Esophagus squamous epithelium (tissue), 5 donors: ENCODE measurements at regions of chr9 and their contacts with region 1.

Region 1: DNA sequence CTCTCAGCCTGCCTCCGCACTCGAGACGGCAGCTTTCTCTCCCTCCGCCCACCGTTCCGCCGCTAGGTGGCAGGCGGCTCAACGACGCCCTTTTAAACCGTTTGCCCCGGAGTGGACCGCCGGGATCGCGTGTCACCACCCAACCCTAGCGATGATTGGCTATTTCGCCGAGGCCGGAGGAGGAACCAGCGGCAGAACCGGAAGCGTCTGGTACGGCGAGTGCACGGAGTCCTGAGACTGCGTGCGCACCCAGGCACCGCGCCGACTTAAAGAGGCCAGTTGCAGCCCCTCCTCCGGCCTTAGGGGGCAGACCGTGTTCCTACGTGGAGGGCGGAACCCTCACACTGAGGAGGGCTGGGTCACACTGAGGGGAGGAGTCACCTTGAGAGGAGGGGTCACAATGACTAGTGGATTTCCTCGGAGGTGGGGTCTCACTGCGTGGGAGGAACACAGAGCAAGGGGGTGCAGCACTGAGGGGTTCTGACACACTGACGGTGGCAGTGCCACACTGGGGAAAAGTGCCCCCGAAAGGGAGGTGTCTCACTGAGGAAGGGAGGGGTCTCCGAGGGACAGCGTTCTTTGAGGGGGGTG is 980 bp upstream of the TESK1 start:
- DNase-seq: peak; percentile 98
- H3K4me3 ChIP-seq: peak overlapping the region; percentile 63 to 96 (median 84)
- H3K27ac ChIP-seq: peak overlapping the region; percentile 89 to 98 (median 96)
- H3K4me1 ChIP-seq: peaks cover 15 to 46% (median 16%) of the 10 kb centered on the region in 3 donors
- H3K27me3 ChIP-seq: no peaks in the 10 kb centered on the region
- CTCF ChIP-seq: peak; percentile 83 to 99 (median 98)
- POLR2A ChIP-seq: peak in 3 of 4 donors; percentile 37 to 72 (median 59)

Region 2: DNA sequence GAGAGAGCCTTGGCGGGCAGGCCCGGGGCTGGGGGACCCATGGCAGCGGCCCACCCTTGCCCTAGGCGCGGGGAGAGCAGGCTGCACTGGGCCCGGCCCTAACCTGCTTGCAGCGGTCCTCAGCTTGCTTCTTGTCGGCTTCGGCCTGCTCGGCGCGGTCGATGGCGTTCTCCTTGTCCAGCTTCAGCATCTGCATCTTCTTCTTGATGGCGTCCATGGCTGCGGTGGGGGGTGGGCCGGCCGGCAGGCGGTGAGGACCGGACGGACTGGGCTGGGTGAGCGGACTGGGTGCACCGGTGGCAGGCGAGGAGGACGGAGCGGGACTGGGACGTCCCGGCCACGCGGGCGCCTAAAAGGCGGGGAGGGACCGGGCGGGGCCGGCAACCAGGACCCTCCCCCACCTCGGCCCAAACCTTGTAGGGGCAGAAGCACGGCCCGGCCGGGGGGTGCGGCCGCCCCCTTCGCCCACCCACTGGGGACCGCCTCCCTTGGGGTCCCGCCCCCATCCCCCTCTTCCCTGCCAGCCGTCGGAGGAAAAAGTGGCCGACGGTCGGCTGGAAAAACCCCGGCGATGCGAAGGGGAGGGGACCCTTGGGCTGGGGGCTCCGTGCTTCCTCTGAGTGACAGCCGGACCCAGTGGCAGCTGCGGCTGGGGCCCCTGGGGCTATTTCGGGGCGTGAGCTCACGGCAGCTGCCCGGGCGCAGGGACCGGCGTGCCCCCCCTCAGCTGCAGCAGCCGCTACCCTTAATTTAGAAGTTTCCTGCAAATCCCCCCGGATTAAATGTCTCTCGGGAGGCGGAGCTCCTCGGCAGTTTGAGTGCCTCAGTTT is 85.7 kb after region 1 on chr9 and contains the start of gene TPM2:
- intact Hi-C with region 1: loop called (anchors 10 kb)
- DNase-seq: no peak
- H3K4me3 ChIP-seq: peak within 1 kb of the TSS; percentile 49 to 76 (median 65)
- H3K27ac ChIP-seq: peak within 1 kb of the TSS; percentile 74 to 92 (median 88)
- H3K4me1 ChIP-seq: peaks cover 0 to 41% (median 5%) of the 10 kb centered on the region in 3 donors
- H3K27me3 ChIP-seq: peaks cover 0 to 6% (median 0%) of the 10 kb centered on the region in 4 donors
- CTCF ChIP-seq: no peak
- POLR2A ChIP-seq: peak in 2 of 4 donors; percentile 71 to 89
- total RNA-seq, gene TPM2: 80.8 to 1,148 (median 217) TPM

Region 3: GRCh38 chr9:35732122-35732799 is 128.2 kb after region 1 on chr9 and contains the starts of genes CREB3 and TLN1:
- intact Hi-C with region 1: loop called (anchors 10 kb)
- DNase-seq: peak; percentile 92
- H3K4me3 ChIP-seq: peak within 1 kb of the TSS; percentile 69 to 91 (median 80)
- H3K27ac ChIP-seq: peak within 1 kb of the TSS; percentile 95 to 100 (median 98)
- H3K4me1 ChIP-seq: peaks cover 19 to 71% (median 35%) of the 10 kb centered on the region in 3 donors
- H3K27me3 ChIP-seq: no peaks in the 10 kb centered on the region
- CTCF ChIP-seq: peak in 2 of 6 experiments; percentile 10 to 21
- POLR2A ChIP-seq: peak in 3 of 4 donors; percentile 57 to 76 (median 76)
- total RNA-seq, gene CREB3: 10.5 to 24.2 (median 19.2) TPM
- total RNA-seq, gene TLN1: 94.7 to 233 (median 112) TPM

Region 4: GRCh38 chr9:36891341-36891959 is 1287.4 kb after region 1 on chr9:
- intact Hi-C with region 1: no loop called
- DNase-seq: no peak
- H3K4me3 ChIP-seq: no peak overlapping the region
- H3K27ac ChIP-seq: no peak overlapping the region
- H3K4me1 ChIP-seq: no peaks in the 10 kb centered on the region
- H3K27me3 ChIP-seq: peaks cover 0 to 38% (median 0%) of the 10 kb centered on the region in 4 donors
- CTCF ChIP-seq: no peak
- POLR2A ChIP-seq: no peak